Adrenal gland (tissue), 19 donors: ENCODE measurements at regions of chr1 and their contacts with region 1.

Region 1: DNA sequence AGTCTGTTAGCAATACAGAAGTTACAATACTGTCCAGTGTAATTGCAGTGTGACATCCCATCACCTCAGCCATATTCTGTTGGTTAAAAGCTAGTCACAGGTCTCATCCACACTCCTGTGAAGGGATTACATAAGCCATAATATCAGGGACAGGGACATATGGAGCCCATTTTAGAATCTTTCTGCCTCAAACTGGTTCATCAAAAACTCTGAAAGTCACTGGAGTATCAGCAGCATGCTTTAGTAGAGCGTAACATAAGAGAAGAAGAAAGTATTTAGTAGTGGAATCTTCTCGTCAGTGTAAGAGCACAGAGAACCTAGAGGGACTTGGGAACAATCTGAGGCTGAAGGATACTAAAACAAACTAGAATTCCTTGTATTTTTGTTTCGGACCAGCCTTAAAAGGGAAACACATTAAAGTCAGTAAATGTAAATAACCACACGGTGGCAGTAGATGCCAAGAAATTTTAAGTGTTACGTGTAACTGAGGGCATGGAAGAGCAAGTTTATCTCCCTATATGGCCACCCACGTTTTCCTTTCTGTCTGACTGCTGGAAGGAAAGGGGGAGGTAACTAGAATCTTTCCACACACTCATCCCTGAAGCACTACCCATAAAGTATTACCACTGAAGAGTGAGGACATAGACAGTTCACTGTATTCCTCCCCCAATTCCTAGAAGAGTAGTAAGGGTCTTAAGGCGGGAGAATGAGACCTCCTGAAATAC is 41.6 kb upstream of the AGL start:
- DNase-seq: peak in 5 of 7 donors; percentile 29 to 60 (median 50)
- H3K4me3 ChIP-seq: no peak overlapping the region
- H3K27ac ChIP-seq: no peak overlapping the region
- H3K4me1 ChIP-seq: no peaks in the 10 kb centered on the region
- H3K27me3 ChIP-seq: no peaks in the 10 kb centered on the region
- CTCF ChIP-seq: peak; percentile 46 to 87 (median 75)
- POLR2A ChIP-seq: no peak

Region 2: DNA sequence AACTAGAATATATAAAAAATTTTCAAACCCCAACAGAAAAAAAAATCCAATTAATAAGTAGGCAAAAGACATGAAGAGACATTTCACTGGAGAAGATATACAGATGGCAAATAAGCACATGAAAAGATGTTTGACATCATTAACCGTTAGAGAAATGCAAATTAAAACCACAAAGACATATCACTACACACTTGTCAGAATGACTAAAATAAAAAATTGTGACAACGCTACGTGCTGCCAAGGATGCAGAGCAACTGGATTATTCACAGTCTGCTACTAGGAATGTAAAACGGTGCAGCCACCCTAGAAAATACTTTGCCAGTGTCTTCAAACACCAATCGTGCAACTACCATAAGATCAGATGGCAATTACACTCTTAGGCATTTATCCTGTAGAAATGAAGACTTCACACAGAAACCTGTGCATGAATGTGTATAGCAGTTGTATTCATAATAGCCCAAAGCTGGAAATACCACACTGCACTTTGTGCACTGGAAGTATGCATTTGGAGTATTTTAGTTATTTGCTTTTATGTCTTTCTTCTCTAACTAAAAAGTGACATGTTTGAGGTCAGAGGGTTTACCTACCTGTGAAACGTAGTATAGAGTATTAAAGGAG is 238.0 kb before region 1 on chr1:
- intact Hi-C with region 1: no loop called
- DNase-seq: no peak
- H3K4me3 ChIP-seq: no peak overlapping the region
- H3K27ac ChIP-seq: no peak overlapping the region
- H3K4me1 ChIP-seq: peaks cover 0 to 5% of the 10 kb centered on the region in 2 donors
- H3K27me3 ChIP-seq: no peaks in the 10 kb centered on the region
- CTCF ChIP-seq: no peak
- POLR2A ChIP-seq: no peak

Region 3: GRCh38 chr1:100606438-100606837 is 797.9 kb after region 1 on chr1:
- intact Hi-C with region 1: loop called in 1 of 2 experiments (anchors 10 kb)
- DNase-seq: peak; percentile 53 to 84 (median 74)
- H3K4me3 ChIP-seq: no peak overlapping the region
- H3K27ac ChIP-seq: no peak overlapping the region
- H3K4me1 ChIP-seq: peaks cover 0 to 8% of the 10 kb centered on the region in 2 donors
- H3K27me3 ChIP-seq: no peaks in the 10 kb centered on the region
- CTCF ChIP-seq: peak; percentile 69 to 90 (median 84)
- POLR2A ChIP-seq: no peak

Region 4: DNA sequence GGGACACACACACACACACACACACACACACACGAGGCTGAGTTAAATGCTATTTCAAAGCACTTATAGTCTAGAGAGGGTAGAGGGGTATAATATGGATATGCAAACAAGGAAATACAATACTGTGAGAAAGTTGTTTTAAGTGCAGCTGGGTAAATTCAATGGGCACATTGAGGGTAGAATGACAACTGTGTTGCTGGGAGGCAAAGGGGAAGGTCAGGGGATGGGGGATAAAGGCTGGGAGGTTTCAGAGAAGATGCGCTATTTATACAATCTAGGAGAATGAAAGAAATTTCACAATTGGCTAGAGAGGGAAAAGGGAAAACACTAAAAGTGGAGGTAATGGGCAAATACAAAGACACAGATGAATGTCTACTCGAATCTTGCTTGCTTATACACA is 1066.7 kb after region 1 on chr1:
- intact Hi-C with region 1: loop called in 1 of 2 experiments (anchors 10 kb)
- DNase-seq: no peak
- H3K4me3 ChIP-seq: no peak overlapping the region
- H3K27ac ChIP-seq: no peak overlapping the region
- H3K4me1 ChIP-seq: peaks cover 0 to 3% of the 10 kb centered on the region in 2 donors
- H3K27me3 ChIP-seq: no peaks in the 10 kb centered on the region
- CTCF ChIP-seq: no peak
- POLR2A ChIP-seq: no peak